ENCODE measurements at regions of chr6 and their contacts with region 1.

Region 1: DNA sequence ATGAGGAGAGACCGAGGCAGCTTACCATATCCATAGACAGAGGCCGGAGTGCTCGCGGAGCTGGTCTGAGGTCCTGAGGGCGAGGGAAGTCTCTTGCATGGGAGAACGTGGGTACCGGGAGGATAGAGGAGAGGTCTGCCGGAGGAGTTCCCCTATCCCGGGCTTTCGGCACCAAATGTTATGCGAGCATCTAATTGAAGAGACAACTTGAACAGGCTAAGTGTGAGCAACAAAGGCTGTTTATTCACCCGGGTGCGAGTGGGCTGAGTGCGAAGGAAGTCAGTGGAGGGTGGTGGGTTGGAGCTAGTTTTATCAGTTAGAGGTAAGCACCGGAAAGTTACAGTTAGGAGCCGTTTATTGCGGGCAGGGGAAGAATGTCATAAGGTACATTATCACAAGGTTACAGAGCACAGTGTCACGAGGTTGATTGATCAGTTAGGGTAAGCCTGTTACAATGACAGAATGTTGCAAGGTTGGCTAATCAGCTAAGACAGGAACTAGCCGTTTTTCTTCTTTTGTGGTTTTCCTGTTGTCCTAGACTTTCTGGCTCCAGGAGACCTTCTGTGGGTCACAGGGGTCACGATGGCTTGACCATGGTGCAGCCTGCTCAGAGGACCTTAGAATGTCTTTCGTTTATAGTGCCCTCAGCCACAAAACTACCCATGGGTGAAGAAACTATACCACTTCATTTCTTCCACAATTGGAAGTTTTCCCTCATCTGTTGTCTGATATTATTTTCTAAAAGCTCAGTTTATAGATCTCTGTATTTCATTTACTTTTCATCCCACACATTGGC is 746.0 kb upstream of the ADGRB3 start:
- DNase-seq: peak; percentile 45 to 97 (median 71)
- ATAC-seq: peak; percentile 69
- H3K4me3 ChIP-seq: peak overlapping the region; percentile 93
- H3K27ac ChIP-seq: peak overlapping the region; percentile 98
- H3K4me1 ChIP-seq: peaks cover 4 to 13% of the 10 kb centered on the region in 2 experiments; a peak in 2 of 5 replicates
- H3K27me3 ChIP-seq: no peaks in the 10 kb centered on the region
- CTCF ChIP-seq: no peak
- EP300 ChIP-seq: peak; percentile 100
- POLR2A ChIP-seq: peak; percentile 98
- RAD21 ChIP-seq: peak in 1 of 2 experiments; percentile 38; a peak in 1 of 4 replicates

Region 2: GRCh38 chr6:68040312-68040778 is 151.3 kb after region 1 on chr6:
- CTCF ChIA-PET with region 1: no interaction called
- POLR2A ChIA-PET with region 1: interaction called, 4 read pairs
- in situ Hi-C with region 1: loop called (anchors 5 kb)
- intact Hi-C with region 1: loop called (anchors 1 kb)
- DNase-seq: peak in 1 of 4 experiments; percentile 74
- ATAC-seq: peak; percentile 36
- H3K4me3 ChIP-seq: peak overlapping the region; percentile 60
- H3K27ac ChIP-seq: peak overlapping the region; percentile 97
- H3K4me1 ChIP-seq: peaks cover 0 to 4% of the 10 kb centered on the region in 2 experiments; a peak in 3 of 5 replicates
- H3K27me3 ChIP-seq: no peaks in the 10 kb centered on the region
- CTCF ChIP-seq: no peak
- EP300 ChIP-seq: peak; percentile 58
- POLR2A ChIP-seq: peak; percentile 70
- RAD21 ChIP-seq: 0 out of 4 replicates have a peak, but pooled peaks of 1 of the 2 experiments have one; percentile 17

Region 3: GRCh38 chr6:68196645-68197044 is 307.6 kb after region 1 on chr6:
- CTCF ChIA-PET with region 1: no interaction called
- POLR2A ChIA-PET with region 1: interaction called, 4 read pairs
- in situ Hi-C with region 1: no loop called
- intact Hi-C with region 1: loop called (anchors 1 kb)
- DNase-seq: peak; percentile 20 to 69 (median 36)
- ATAC-seq: peak; percentile 93
- H3K4me3 ChIP-seq: no peak overlapping the region
- H3K27ac ChIP-seq: no peak overlapping the region; the same call in 2 of the 3 replicates
- H3K4me1 ChIP-seq: no peaks in the 10 kb centered on the region
- H3K27me3 ChIP-seq: no peaks in the 10 kb centered on the region
- CTCF ChIP-seq: peak; percentile 38 to 54 (median 52); a peak in 5 of 6 replicates
- EP300 ChIP-seq: no peak
- POLR2A ChIP-seq: no peak
- RAD21 ChIP-seq: peak in 1 of 2 experiments; percentile 56; a peak in 3 of 4 replicates

Region 4: DNA sequence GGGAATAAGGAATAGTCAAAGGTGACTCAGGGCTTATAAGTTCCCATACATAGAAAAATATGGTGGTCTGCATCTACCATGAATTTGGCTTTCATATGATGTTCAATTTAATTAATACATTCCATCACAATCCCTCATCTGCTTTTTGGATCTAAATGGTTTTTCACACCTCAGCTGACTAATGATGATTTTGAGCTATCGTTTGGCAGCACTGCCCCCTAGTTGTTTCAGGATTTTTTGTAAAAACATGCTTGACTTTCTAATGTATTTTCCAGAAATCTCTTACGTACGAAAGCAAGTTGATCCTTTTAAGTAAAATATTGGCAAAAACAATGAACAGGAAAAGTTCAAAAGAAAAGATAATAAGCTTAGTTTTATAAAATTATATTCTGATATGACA is 337.4 kb after region 1 on chr6:
- CTCF ChIA-PET with region 1: no interaction called
- POLR2A ChIA-PET with region 1: interaction called, 4 read pairs
- in situ Hi-C with region 1: loop called (anchors 10 kb)
- intact Hi-C with region 1: loop called (anchors 1 kb)
- DNase-seq: peak in 2 of 4 experiments; percentile 24 to 68
- ATAC-seq: peak; percentile 71
- H3K4me3 ChIP-seq: no peak overlapping the region
- H3K27ac ChIP-seq: no peak overlapping the region
- H3K4me1 ChIP-seq: 0 out of 5 replicates have a peak, but pooled peaks cover 0 to 3% of the 10 kb centered on the region in 2 experiments
- H3K27me3 ChIP-seq: no peaks in the 10 kb centered on the region
- CTCF ChIP-seq: peak; percentile 19 to 59 (median 48); a peak in 4 of 6 replicates
- EP300 ChIP-seq: no peak
- POLR2A ChIP-seq: no peak
- RAD21 ChIP-seq: peak; percentile 68 to 89

Region 5: GRCh38 chr6:68740828-68741500 is 851.9 kb after region 1 on chr6:
- CTCF ChIA-PET with region 1: no interaction called
- POLR2A ChIA-PET with region 1: no interaction called
- in situ Hi-C with region 1: no loop called
- intact Hi-C with region 1: loop called (anchors 5 kb)
- DNase-seq: peak in 3 of 4 experiments; percentile 17 to 82 (median 68)
- ATAC-seq: peak; percentile 78
- H3K4me3 ChIP-seq: no peak overlapping the region
- H3K27ac ChIP-seq: peak overlapping the region; percentile 91
- H3K4me1 ChIP-seq: peaks cover 6 to 51% of the 10 kb centered on the region in 2 experiments; a peak in 4 of 5 replicates
- H3K27me3 ChIP-seq: no peaks in the 10 kb centered on the region
- CTCF ChIP-seq: no peak
- EP300 ChIP-seq: peak; percentile 86
- POLR2A ChIP-seq: no peak
- RAD21 ChIP-seq: peak in 1 of 2 experiments; percentile 24; a peak in 1 of 4 replicates

Measured in K562 (cell line).